SK-N-SH (cell line): ENCODE measurements at regions of chr6 and their contacts with region 1.

Region 1: GRCh38 chr6:42661540-42662153 is 60.8 kb downstream of the PRPH2 start:
- DNase-seq: peak; percentile 65
- H3K4me3 ChIP-seq: no peak overlapping the region; a peak in 1 of 4 replicates
- H3K27ac ChIP-seq: no peak overlapping the region
- H3K4me1 ChIP-seq: no peaks in the 10 kb centered on the region
- H3K27me3 ChIP-seq: no peaks in the 10 kb centered on the region
- CTCF ChIP-seq: peak; percentile 96
- EP300 ChIP-seq: no peak
- RAD21 ChIP-seq: peak; percentile 90

Region 2: GRCh38 chr6:42493914-42494539 is 167.6 kb before region 1 on chr6:
- CTCF ChIA-PET with region 1: no interaction called
- POLR2A ChIA-PET with region 1: no interaction called
- DNase-seq: no peak
- H3K4me3 ChIP-seq: no peak overlapping the region
- H3K27ac ChIP-seq: no peak overlapping the region
- H3K4me1 ChIP-seq: no peaks in the 10 kb centered on the region
- H3K27me3 ChIP-seq: no peaks in the 10 kb centered on the region
- CTCF ChIP-seq: no peak
- EP300 ChIP-seq: no peak
- RAD21 ChIP-seq: no peak

Region 3: DNA sequence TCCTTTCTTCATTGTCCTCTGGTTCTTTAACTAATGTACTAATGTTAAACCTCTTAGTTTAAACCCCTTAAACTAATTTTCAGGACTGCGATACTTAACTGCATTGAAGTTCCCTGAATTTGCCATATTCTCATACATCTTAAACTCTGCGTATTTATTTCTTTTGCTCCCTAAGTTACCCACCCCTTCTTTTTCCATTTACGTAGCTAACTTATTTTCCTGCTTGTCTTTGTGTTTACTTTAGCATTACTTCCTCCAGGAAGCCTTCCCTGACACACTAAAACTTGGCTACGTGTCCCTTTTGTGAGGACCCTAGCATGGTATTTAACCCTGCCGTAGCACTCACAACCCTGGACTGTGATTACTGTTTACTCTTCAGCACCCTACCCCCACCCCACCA is 18.9 kb before region 1 on chr6:
- CTCF ChIA-PET with region 1: interaction called, 11 read pairs
- POLR2A ChIA-PET with region 1: interaction called, 4 read pairs
- DNase-seq: no peak
- H3K4me3 ChIP-seq: no peak overlapping the region
- H3K27ac ChIP-seq: no peak overlapping the region
- H3K4me1 ChIP-seq: no peaks in the 10 kb centered on the region
- H3K27me3 ChIP-seq: no peaks in the 10 kb centered on the region
- CTCF ChIP-seq: no peak
- EP300 ChIP-seq: no peak
- RAD21 ChIP-seq: no peak

Region 4: DNA sequence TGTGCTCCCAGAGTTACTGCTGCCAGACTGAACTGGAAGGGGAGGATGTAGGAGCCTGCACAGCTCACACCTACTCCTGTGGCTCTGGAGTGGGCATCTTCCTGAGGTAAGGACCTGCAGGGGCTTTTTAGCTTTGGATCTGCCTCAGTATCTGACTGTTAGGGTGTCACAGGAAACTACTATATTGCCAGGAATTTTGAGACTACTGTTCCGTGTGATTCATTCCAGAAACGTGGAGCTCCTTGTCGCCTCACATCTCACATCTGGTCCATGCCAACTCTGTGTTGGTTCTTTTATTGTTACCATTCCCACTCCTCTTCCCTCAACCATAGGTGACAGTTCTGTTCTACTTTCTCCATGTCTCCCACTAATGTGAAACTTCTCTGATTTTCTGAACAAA is 26.6 kb after region 1 on chr6:
- CTCF ChIA-PET with region 1: interaction called, 10 read pairs
- POLR2A ChIA-PET with region 1: no interaction called
- DNase-seq: no peak
- H3K4me3 ChIP-seq: no peak overlapping the region
- H3K27ac ChIP-seq: no peak overlapping the region
- H3K4me1 ChIP-seq: peaks cover 0 to 8% of the 10 kb centered on the region in 2 experiments
- H3K27me3 ChIP-seq: no peaks in the 10 kb centered on the region
- CTCF ChIP-seq: no peak
- EP300 ChIP-seq: no peak
- RAD21 ChIP-seq: no peak

Region 5: GRCh38 chr6:42745707-42746462 is 84.2 kb after region 1 on chr6 and contains the start of gene TBCC:
- CTCF ChIA-PET with region 1: interaction called, 17 read pairs
- POLR2A ChIA-PET with region 1: no interaction called
- DNase-seq: peak; percentile 97
- H3K4me3 ChIP-seq: peak within 1 kb of the TSS; percentile 75 to 82
- H3K27ac ChIP-seq: peak within 1 kb of the TSS; percentile 93 to 96
- H3K4me1 ChIP-seq: peaks cover 19 to 30% of the 10 kb centered on the region in 2 experiments; a peak in 3 of 4 replicates
- H3K27me3 ChIP-seq: no peaks in the 10 kb centered on the region
- CTCF ChIP-seq: no peak
- EP300 ChIP-seq: peak in 1 of 2 experiments; percentile 14; a peak in 2 of 4 replicates
- RAD21 ChIP-seq: no peak
- polyA plus RNA-seq, gene TBCC: 12.7 and 18.2 TPM in 2 replicates

Region 6: GRCh38 chr6:42879372-42880239 is 218.0 kb after region 1 on chr6 and contains the start of gene RPL7L1:
- CTCF ChIA-PET with region 1: interaction called, 68 read pairs
- POLR2A ChIA-PET with region 1: interaction called, 4 read pairs
- DNase-seq: peak; percentile 75
- H3K4me3 ChIP-seq: peak within 1 kb of the TSS; percentile 74 to 87
- H3K27ac ChIP-seq: peak within 1 kb of the TSS; percentile 89 to 94
- H3K4me1 ChIP-seq: peaks cover 0 to 3% of the 10 kb centered on the region in 2 experiments; a peak in 1 of 4 replicates
- H3K27me3 ChIP-seq: no peaks in the 10 kb centered on the region
- CTCF ChIP-seq: no peak
- EP300 ChIP-seq: peak in 1 of 2 experiments; percentile 7; a peak in 1 of 4 replicates
- RAD21 ChIP-seq: no peak
- polyA plus RNA-seq, gene RPL7L1: 22.1 and 28.7 TPM in 2 replicates

Region 7: DNA sequence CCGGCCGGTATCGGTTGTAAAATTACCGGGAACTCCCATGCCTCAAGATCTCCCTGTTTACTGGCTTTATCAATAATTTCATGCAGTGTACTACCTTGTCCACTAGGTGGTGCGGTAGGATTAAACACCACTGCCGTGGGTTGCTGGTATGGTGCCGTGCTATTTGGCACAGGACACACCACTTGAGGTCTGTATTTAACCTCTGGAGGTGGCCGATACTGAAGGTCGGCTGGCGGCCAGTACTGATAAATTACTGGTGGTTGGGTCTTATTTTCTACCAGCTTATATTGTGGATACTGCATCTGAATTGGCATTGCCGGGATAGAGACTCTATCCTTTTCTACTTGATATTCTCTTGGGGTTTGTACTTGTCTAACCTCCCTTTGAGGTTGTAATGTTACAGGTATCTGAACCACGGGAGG is 239.9 kb after region 1 on chr6:
- CTCF ChIA-PET with region 1: interaction called, 11 read pairs
- POLR2A ChIA-PET with region 1: no interaction called
- DNase-seq: peak; percentile 72
- H3K4me3 ChIP-seq: peak overlapping the region in 1 of 2 experiments; percentile 20; a peak in 1 of 4 replicates
- H3K27ac ChIP-seq: no peak overlapping the region
- H3K4me1 ChIP-seq: peaks cover 0 to 9% of the 10 kb centered on the region in 2 experiments; a peak in 2 of 4 replicates
- H3K27me3 ChIP-seq: no peaks in the 10 kb centered on the region
- CTCF ChIP-seq: peak; percentile 89
- EP300 ChIP-seq: no peak
- RAD21 ChIP-seq: peak; percentile 97